ENCODE measurements at regions of chr2 and their contacts with region 1.

Region 1: DNA sequence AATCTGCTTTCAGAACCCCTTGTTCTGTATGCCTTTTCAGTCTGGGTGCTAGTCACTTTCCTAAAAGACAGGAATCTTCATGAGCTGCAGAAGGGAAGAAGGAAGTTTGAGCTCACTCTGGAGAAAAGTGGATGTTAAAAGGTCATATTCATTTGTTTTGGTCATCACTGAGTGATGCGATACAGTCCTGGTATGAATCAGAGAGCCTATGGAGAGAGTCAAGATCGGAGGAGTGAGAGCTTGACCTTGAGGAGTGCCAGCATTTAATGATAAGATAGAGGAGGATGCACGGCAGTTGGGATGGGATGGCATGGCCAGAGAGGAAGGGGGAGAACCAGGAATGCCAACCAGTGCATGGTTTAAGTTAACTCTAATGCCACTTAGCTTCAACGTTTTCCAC is 19.6 kb downstream of the USP39 start:
- DNase-seq: no peak
- H3K4me3 Mint-ChIP-seq: no peak overlapping the region
- H3K27ac Mint-ChIP-seq: no peak overlapping the region
- H3K4me1 Mint-ChIP-seq: peaks cover 9% of the 10 kb centered on the region
- H3K27me3 Mint-ChIP-seq: no peaks in the 10 kb centered on the region

Region 2: DNA sequence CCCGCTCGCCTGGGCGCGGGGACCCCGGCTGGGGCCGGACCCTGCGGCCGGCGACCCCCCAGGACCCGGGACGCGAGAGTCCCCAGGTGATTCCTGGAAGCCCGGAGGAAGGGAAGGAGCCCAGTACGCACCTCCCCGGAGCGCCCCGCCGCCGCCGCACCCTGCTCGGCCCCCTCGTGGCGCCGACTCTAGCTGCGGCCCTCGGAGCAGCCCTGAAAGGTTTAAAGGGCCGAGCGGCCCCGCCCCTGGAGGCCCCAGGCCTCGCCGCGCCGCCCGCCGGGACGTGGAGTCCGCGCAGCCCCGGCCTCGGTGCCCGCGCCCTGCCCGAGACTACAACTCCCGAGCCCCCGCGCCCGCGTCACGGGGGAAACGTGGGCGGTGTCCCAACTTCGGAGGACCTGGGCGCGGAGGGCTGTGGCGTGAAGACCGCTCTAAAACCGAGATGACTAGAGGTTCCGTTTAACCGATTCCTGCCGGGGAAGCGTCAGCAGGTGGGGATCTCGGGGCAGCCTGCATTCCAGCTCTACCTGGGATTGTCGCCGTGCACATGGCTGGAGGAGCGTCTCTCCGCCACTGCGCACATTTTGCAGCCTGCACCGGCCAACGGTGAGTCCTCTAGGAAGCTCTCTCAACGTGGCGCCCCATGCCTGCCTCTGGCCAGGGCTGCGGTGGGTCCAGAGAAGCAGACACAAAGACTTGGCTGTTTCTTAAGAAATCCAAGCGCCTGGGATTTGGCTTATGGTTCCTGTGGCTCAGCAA is 33.0 kb before region 1 on chr2 and contains the start of gene TMEM150A:
- CTCF ChIA-PET with region 1: interaction called, 25 read pairs
- intact Hi-C with region 1: no loop called
- DNase-seq: peak; percentile 86
- H3K4me3 Mint-ChIP-seq: peak within 1 kb of the TSS; percentile 87
- H3K27ac Mint-ChIP-seq: peak within 1 kb of the TSS; percentile 33
- H3K4me1 Mint-ChIP-seq: peaks cover 25% of the 10 kb centered on the region
- H3K27me3 Mint-ChIP-seq: no peaks in the 10 kb centered on the region
- total RNA-seq, gene TMEM150A: 0.55 to 0.67 TPM

Region 3: DNA sequence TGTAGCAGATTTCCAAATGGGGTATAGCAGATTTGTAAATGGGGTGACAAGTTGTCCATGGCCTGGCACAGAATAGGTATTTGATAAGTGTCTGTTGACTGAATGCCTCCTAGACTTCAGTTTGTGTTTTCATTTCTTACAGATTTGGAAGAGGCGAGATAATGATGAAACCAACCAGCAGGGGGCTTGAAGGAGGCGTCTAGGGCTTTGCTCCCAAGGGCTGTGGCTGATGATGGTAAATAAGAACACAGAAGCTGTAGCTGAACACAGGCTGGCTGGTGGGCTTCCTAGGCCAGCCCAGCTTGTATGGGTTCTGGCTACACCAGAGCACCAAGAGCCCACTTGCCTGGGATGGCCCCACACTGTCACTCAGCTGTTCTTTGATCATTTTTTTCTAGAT is 13.0 kb after region 1 on chr2:
- CTCF ChIA-PET with region 1: interaction called, 75 read pairs
- intact Hi-C with region 1: no loop called
- DNase-seq: no peak
- H3K4me3 Mint-ChIP-seq: no peak overlapping the region
- H3K27ac Mint-ChIP-seq: no peak overlapping the region
- H3K4me1 Mint-ChIP-seq: no peaks in the 10 kb centered on the region
- H3K27me3 Mint-ChIP-seq: no peaks in the 10 kb centered on the region